Dendritic cell treated with granulocyte-macrophage colony-stimulating factor and Interleukin-4, amounts not matched to agents 40 ng/mL and 50 ng/mL, for 4 days (primary cell): ENCODE measurements at regions of chr19 and their contacts with region 1.

Region 1: DNA sequence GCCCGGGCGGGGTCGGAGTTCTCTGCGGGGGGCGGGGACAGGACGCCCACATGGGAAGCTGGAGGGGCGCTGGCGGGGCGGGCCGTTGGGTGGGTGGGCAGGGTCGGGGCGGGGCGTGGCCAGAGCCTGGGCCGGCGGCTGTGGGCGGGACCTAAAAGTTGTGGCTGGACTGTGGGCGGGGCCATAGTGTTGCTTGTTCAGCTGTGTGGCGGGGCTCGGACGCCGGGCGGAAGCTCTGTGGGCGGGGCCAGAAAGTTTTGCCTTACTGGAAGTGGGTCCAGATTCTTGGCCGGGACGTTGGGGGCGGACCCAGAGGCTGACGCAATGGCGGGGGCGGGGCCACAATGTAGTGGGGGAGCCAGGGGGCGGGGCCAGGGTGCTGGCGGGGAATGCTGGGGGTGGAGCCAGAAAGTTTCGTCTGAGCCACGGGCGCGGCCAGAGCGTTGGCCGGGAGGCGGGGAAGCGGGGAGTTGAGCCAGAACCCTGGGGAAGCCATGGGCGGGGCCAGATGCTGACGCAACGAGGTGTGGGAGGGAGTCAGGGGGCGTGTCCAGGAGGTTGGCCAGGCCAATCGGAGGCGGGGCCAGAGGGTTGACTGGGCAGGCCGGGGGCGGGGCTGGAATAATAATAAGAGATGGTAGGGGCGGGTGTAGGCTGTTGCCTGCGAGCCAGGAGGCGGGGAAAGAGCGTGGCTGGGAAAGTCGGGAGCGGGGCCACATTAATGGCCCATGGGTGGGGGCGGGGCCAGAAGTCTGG is 541 bp downstream of the CCDC9 start:
- H3K4me3 Mint-ChIP-seq: peak overlapping the region; percentile 87
- H3K27ac Mint-ChIP-seq: peak overlapping the region; percentile 97
- H3K4me1 Mint-ChIP-seq: peaks cover 42% of the 10 kb centered on the region
- H3K27me3 Mint-ChIP-seq: peaks cover 6% of the 10 kb centered on the region

Region 2: DNA sequence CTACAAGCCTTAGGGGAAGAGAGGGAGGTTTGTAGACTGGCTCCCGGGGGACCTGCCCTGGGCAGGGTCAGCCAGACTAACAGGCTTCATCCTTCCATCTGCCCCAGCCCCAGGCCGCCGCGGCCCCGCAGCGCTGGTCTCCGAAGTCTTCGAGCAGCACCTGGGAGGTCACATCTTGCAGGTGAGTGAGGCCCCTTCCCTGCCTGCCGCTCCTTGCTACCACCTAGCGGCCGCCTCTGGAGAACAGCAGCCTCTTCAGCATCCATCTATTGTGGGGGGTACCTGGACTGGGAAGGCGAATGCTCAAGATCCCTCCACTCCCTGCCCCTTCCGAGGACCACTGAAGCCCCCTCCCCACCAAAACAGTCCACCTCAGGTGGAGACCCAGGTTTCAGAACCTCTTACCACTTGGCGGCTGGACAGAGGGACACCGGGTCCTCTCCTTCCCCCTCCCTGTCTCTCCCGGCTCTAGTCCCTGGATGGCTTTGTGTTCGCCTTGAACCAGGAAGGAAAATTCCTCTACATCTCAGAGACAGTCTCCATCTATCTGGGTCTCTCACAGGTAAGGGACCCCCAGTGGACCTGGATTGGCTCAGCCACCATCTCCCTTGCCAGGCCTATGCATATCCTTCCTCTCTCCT is 224.6 kb before region 1 on chr19:
- intact Hi-C with region 1: no loop called
- H3K4me3 Mint-ChIP-seq: no peak overlapping the region
- H3K27ac Mint-ChIP-seq: no peak overlapping the region
- H3K4me1 Mint-ChIP-seq: peaks cover 21% of the 10 kb centered on the region
- H3K27me3 Mint-ChIP-seq: peaks cover 76% of the 10 kb centered on the region

Region 3: GRCh38 chr19:47158879-47159503 is 97.9 kb before region 1 on chr19:
- intact Hi-C with region 1: no loop called
- H3K4me3 Mint-ChIP-seq: no peak overlapping the region
- H3K27ac Mint-ChIP-seq: peak overlapping the region; percentile 11
- H3K4me1 Mint-ChIP-seq: peaks cover 25% of the 10 kb centered on the region
- H3K27me3 Mint-ChIP-seq: no peaks in the 10 kb centered on the region

Region 4: GRCh38 chr19:47190167-47190727 is 66.6 kb before region 1 on chr19:
- intact Hi-C with region 1: no loop called
- H3K4me3 Mint-ChIP-seq: no peak overlapping the region
- H3K27ac Mint-ChIP-seq: no peak overlapping the region
- H3K4me1 Mint-ChIP-seq: no peaks in the 10 kb centered on the region
- H3K27me3 Mint-ChIP-seq: no peaks in the 10 kb centered on the region

Region 5: DNA sequence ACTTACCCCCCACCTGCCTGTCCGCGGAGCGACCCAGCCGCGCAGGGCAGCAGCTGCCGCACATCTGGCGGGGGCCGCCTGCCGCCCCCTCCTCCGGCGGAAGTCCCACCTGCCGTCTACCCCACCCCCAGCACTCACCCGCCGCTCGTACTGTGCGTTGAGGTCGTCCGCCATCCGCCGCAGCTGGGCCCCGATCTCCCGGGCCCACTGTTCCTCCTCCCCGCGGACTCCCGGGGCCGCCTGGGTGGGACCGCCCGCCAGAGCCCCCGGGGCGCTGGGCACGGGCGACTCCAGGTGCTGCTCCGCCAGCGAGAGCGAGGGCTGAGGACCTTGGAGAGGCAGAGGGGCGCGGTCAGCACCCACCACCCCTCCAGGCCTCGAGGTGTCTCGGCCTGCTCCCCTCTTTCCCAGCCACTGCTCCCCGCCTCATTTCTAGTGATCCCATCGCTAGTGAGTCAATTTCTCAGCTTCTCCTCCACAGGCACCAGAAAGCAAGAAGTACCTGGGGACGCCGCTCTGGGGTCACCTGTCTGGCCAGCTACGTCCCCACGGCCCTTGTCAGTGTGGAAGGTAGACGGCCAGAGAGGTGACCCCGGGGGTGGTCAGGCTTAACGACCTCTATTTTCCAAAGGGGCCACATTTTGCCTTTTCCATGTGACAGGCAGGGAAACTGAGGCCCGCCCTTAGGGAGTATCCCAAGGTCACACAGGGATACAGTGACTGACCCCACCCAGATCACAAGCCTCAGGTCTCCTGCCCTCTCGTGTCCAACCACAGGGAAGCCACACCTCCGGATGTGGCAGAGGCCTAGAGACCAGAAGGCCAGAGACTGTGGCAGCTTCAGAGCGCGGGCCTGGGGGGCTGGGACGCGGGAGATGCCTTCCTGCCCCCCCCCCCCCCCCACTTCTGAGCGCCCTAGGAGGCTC is 30.2 kb before region 1 on chr19:
- intact Hi-C with region 1: loop called (anchors 1 kb)
- H3K4me3 Mint-ChIP-seq: no peak overlapping the region
- H3K27ac Mint-ChIP-seq: no peak overlapping the region
- H3K4me1 Mint-ChIP-seq: peaks cover 22% of the 10 kb centered on the region
- H3K27me3 Mint-ChIP-seq: peaks cover 2% of the 10 kb centered on the region

Region 6: GRCh38 chr19:47273978-47274890 is 17.4 kb after region 1 on chr19 and contains the start of gene INAFM1:
- intact Hi-C with region 1: loop called (anchors 1 kb)
- H3K4me3 Mint-ChIP-seq: peak within 1 kb of the TSS; percentile 92
- H3K27ac Mint-ChIP-seq: peak within 1 kb of the TSS; percentile 96
- H3K4me1 Mint-ChIP-seq: peaks cover 56% of the 10 kb centered on the region
- H3K27me3 Mint-ChIP-seq: peaks cover 7% of the 10 kb centered on the region